ENCODE measurements at regions of chr6 and their contacts with region 1.

Region 1: DNA sequence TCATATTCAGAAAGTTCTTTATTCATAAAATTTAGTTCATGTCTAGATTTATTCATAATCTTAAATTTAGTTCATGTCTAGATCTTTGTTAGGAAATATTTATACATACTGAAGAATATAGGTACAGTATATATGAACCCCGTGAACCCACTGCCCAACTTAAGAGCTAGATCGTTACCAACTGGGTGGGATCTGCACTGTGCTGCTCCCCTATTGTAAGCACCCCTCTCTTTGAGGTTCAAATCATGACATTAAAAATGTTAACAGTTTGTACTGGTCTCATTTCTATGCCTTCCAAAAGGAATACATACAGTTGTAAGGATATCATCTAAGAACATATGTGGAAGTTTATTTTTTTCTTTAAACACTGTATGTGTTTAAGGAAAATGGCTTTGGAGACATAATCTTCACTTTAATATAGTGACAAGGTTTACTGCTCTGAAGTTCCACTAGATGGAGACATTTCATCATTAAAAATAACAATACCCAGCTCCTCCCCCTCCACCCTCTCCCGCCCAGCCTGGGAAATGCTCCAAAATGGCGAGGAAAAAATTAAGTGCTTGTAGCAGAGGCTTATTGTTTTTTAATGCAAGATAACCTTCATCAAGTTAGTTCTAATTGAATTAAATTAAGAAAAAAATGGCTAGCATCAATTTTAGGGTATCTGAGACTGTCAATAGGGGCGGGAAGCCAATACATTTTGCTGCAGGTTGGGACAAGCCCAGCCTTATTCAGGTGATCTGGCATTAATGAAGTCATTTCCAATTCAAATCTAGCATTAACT is 104.1 kb upstream of the TRAF3IP2 start:
- DNase-seq: peak in 6 of 10 donors; percentile 47 to 69 (median 60)
- H3K4me3 ChIP-seq: peak overlapping the region in 54 of 59 donors; percentile 1 to 62 (median 34)
- H3K27ac ChIP-seq: peak overlapping the region in 54 of 59 donors; percentile 4 to 86 (median 76)
- H3K27me3 ChIP-seq: no peaks in the 10 kb centered on the region
- CTCF ChIP-seq: peak; percentile 75 to 97 (median 90)

Region 2: DNA sequence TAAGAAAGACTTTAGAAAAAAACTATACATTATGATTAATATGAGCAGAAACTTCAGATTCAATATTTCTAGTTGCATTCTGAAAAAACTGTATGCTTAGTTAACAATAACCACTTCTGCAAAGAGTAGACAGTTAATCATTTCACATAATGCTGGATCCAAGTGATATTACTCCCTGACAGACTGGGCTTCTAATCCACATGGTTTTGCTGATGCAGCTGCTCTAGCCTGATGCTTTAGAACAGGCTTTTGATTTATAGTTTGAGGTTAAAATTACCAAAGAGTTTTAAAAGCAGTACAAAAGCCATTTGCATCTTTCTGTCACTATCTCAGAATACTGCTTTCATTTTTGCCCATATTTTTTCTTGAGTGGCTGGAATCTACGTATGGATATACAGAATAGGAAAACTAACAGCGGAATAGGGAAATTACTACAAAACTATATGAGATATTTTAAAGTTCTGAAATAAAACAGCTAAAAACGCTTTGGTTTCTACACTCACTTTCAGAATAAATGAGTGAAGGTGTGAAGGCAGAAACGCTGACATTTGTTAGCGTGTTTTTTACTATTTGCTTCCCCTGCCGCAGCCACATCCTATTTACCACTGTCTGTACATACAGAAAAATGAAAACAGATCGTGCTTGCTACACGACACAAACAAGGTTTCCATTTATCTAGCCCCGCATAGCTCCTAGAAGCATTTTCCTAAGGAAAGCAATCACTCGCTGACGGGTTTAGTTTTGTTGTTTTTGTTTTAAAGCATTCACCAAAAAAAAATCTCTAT is 1413.4 kb before region 1 on chr6:
- intact Hi-C with region 1: no loop called
- DNase-seq: no peak
- H3K4me3 ChIP-seq: peak overlapping the region in 44 of 59 donors; percentile 2 to 47 (median 23)
- H3K27ac ChIP-seq: peak overlapping the region in 51 of 59 donors; percentile 4 to 83 (median 55)
- H3K27me3 ChIP-seq: no peaks in the 10 kb centered on the region
- CTCF ChIP-seq: no peak

Region 3: DNA sequence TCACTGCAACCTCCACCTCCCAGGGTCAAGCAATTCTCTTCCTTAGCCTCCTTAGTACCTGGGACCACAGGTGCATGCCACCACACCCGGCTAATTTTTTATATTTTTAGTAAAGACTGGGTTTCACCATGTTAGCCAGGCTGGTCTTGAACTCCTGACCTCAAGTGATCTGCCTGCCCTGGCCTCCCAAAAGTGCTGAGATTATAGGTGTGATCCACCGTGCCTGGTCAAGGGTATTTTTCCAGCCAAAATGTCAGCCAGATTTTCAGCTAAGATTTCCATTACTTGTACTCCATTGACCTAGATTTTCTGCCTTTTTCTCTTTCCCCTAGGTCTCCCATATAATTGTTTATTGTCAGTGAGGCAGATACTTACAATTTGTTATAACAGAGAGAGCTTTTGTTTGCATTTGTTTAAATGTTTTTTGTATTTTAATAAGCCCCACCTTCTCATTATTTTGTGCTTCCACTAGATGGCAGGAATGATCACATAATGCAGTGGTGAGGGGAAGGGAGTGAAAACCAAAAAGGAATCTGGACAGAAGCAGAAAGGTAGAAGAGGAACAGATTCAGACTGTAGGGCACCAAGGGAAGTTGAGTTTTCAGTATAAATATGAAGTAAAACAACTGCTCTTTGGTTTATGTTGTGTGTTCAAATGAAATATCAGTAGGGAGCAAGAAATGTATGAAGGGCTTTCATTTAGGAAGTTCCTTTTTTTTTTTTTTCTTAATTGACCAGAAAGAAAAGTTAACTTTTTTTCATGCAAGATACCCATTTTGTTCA is 698.3 kb before region 1 on chr6:
- intact Hi-C with region 1: loop called in 1 of 2 experiments (anchors 10 kb)
- DNase-seq: no peak
- H3K4me3 ChIP-seq: no peak overlapping the region
- H3K27ac ChIP-seq: peak overlapping the region in 33 of 59 donors; percentile 4 to 80 (median 49)
- H3K27me3 ChIP-seq: no peaks in the 10 kb centered on the region
- CTCF ChIP-seq: peak; percentile 39 to 84 (median 68)

Region 4: DNA sequence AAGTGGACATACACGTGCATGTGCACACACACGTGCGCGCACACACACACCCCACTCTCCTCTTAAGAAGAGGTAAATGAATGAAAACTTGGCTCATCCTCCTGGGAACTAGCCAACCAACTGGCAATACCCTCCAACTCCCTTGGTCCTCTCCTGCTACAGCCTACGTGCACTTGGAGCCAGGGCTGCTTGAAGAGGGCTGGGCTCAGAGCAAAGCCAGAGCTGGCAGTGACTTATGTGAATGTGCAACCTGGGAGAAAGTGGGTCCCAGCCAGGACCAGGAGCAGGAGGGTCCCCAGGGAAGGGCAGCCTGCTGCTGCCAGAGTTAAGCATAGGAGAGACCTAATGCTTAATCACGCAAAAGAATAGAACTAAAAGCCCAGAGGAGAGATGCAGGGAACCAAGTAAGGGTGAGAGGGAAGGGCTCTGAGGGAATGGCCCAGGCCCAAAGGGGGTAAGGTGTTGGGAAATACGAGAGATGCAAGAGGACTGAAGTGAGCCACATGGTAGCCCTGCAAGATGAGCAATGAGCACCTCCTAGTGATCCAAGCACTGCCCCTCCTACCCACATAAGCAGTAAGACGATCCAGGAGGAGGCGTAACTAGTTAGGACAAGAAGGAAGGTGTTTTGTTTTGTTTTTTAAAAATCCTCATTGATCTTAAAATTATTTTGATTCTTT is 128.8 kb before region 1 on chr6:
- intact Hi-C with region 1: no loop called
- DNase-seq: no peak
- H3K4me3 ChIP-seq: no peak overlapping the region
- H3K27ac ChIP-seq: peak overlapping the region in 6 of 59 donors; percentile 10 to 50 (median 25)
- H3K27me3 ChIP-seq: no peaks in the 10 kb centered on the region
- CTCF ChIP-seq: peak in 1 of 56 donors; percentile 3

Region 5: DNA sequence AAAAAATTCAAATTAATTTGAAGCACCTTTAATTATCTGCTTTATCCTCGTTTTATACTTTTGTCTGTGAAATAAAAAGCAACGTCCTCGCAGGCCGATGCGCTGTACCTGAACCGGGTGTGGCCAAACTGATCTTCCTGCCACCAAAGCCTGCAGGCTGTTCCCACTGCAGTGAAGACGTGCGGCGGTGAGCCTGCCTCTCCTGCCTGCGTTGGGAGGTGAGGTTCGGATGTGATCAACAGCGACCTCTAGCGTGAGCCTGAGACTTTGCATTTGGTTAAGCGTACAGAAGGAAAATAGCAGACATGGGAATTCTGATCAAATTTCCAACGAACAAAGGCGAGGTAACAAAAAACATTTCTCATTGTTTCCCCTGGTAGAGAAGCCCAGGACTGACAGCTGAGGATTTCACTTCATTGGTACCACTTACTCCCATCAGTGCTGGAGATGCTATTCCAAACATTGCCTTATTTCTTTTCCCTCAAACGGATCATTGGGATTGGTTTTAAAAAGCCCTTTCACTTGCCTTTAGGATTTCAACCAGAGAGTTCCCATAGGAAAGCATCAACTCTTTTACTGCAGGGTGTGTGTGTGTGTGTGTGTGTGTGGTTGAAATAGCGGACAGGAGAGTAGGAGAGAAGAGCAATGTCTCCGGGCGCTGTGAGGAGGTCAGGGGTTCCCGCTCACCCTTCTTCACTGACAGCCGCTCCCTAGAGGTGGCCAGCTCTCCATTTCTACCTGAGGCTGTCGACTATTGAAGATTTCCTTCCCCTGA is 287.5 kb after region 1 on chr6:
- intact Hi-C with region 1: loop called (anchors 1 to 2 kb)
- DNase-seq: peak; percentile 57 to 88 (median 81)
- H3K4me3 ChIP-seq: peak overlapping the region in 45 of 59 donors; percentile 2 to 56 (median 29)
- H3K27ac ChIP-seq: peak overlapping the region in 11 of 59 donors; percentile 4 to 61 (median 32)
- H3K27me3 ChIP-seq: no peaks in the 10 kb centered on the region
- CTCF ChIP-seq: peak; percentile 88 to 99 (median 95)

Region 6: GRCh38 chr6:112043032-112044007 is 333.5 kb after region 1 on chr6:
- intact Hi-C with region 1: loop called (anchors 1 to 2 kb)
- DNase-seq: peak; percentile 88 to 95 (median 92)
- H3K4me3 ChIP-seq: peak overlapping the region; percentile 41 to 83 (median 67)
- H3K27ac ChIP-seq: peak overlapping the region; percentile 10 to 97 (median 87)
- H3K27me3 ChIP-seq: no peaks in the 10 kb centered on the region
- CTCF ChIP-seq: peak; percentile 83 to 99 (median 93)

Region 7: DNA sequence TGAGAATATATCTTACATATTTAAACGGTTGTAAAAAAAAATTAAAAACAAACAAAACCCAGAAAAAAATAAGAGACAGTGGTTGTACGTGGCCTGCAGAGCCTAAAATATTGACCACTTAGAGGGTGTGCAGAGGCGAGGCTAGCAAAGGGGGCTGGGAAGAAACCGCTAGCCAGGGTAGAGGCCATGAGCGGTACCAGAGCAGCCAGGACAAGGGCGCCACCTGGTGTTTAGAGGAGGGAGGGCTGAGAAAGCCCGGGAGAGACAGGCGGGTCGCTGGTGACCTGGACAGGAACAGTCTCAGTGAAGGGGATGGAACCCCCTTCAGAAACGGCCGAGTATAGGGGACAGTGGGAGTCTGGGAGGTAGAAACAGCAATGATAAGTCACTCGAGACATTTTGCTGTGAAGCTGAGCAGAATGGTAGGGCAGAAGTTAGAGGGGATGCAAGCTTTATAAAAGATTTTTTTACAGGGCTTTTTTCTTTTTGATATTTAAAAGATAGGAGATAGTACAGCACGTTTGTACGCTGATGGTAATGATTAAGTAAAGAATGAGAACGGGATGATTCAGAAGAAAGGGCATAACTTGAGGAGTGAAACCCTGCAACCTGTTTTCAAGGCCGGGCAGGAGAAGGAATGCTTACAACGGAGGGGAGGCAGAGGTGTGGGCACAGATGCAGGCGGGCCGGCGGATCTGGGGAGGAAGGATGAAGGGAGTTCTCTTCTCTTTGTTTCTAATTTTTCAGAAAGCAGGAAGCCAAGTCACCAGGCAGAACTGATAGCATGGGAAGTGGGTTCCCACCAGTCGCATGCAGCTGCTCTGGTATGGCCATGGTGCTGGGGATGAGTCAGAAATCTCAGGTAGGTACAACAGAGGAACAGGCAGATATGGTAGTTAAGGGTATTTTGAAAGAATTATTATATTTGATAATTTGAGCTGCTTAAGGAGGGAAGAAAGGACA is 453.8 kb after region 1 on chr6:
- intact Hi-C with region 1: loop called in 1 of 2 experiments (anchors 10 kb)
- DNase-seq: peak in 8 of 10 donors; percentile 36 to 67 (median 54)
- H3K4me3 ChIP-seq: no peak overlapping the region
- H3K27ac ChIP-seq: no peak overlapping the region
- H3K27me3 ChIP-seq: no peaks in the 10 kb centered on the region
- CTCF ChIP-seq: peak; percentile 30 to 87 (median 66)

Measured in dorsolateral prefrontal cortex (tissue), 120 donors.